ENCODE measurements at regions of chr17 and their contacts with region 1.

Region 1: DNA sequence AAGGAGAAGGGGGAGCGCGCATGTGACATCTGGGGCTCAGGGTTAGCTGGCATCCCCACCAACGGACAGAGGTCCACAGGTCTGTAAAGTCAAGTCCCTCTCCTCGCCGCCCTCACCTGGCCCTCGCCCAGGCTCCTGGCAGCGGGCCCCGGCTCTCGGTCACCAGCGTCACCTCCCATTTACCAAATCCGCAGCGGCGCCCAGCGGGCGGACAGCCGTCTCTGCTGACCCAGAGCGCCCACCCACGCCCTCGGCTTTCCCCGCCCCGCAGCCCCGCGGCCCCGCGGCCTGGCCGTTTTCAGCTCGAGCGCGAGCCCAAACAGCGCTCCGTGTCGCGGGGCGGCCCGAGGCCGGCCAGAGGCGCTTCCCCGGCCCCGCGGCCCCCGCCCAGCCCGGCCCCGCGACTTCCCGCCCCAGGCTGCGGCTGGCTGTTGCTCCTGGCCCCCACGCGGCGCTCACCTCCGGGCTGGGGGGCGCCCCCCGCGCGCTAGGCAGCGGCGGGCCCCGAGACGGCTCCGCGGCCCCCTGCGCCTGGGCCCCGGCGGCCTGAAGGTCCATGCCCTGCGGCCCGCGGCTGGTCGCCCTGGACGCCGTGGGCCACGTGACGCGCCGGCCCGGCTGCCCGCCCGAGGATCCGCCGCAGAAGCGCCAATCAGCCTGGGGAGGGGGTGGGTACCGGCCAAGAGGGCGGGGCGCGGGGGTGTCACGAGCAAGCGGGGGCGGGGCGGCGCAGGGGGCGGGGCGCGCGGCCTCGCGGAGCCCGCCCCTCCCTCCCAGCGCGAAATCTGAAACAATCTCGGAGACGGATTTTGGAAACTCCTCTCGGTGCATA is at the start of gene COPRS:
- DNase-seq: peak; percentile 92 to 96
- ATAC-seq: peak; percentile 94 to 96 (median 96)
- H3K4me3 ChIP-seq: peak within 1 kb of the TSS; percentile 70
- H3K27ac ChIP-seq: peak within 1 kb of the TSS; percentile 80
- H3K4me1 ChIP-seq: peaks cover 10% of the 10 kb centered on the region
- H3K27me3 ChIP-seq: no peaks in the 10 kb centered on the region
- CTCF ChIP-seq: no peak
- total RNA-seq, gene COPRS: 35.2 to 54.5 (median 39.4) TPM

Region 2: DNA sequence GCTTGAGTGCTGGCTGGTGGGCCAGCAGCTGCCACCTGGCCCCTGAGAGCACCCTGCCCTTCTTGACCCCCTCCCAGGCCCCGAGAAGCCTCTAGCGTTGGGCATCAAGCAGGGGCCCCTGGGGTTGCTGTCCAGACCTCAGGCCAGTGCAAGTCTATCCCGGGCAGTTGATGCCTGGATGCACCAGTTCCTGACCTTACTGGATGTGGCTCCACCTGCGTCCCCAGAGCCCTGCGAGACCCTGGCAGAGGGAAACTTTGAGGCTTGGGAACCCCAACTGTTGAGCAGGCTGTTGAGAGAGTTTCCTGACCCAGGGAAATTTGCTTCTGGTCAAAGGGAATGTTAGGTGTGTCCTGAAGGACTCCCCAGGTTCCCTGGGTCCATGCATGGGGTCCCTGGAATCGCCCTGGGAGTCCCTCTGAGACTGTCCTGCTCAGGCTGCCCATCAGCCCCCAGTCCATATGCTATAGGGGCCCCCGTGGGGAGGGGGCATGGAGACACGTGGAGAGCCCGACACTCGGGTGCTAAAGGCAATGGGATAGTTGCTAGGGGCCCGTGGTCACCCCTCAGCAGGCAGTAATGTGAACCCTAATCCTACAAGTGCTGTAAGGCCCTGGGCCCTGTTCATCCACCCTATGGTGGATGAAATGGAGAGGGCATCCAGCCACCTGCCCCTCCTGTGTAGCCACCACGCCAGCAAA is 421.0 kb before region 1 on chr17:
- intact Hi-C with region 1: loop called in 1 of 2 experiments (anchors 5 kb)
- DNase-seq: peak in 1 of 2 donors; percentile 39
- ATAC-seq: peak in 3 of 4 donors; percentile 11 to 22 (median 19)
- H3K4me3 ChIP-seq: no peak overlapping the region
- H3K27ac ChIP-seq: no peak overlapping the region
- H3K4me1 ChIP-seq: no peaks in the 10 kb centered on the region
- H3K27me3 ChIP-seq: no peaks in the 10 kb centered on the region
- CTCF ChIP-seq: no peak

Region 3: GRCh38 chr17:31558748-31559644 is 299.9 kb before region 1 on chr17:
- intact Hi-C with region 1: no loop called
- DNase-seq: peak; percentile 83 to 90
- ATAC-seq: peak; percentile 89 to 95 (median 93)
- H3K4me3 ChIP-seq: peak overlapping the region; percentile 76
- H3K27ac ChIP-seq: peak overlapping the region; percentile 80
- H3K4me1 ChIP-seq: peaks cover 4% of the 10 kb centered on the region
- H3K27me3 ChIP-seq: peaks cover 0 to 7% (median 2%) of the 10 kb centered on the region in 3 donors
- CTCF ChIP-seq: peak; percentile 95